SK-N-SH (cell line): ENCODE measurements at regions of chr11 and their contacts with region 1.

Region 1: DNA sequence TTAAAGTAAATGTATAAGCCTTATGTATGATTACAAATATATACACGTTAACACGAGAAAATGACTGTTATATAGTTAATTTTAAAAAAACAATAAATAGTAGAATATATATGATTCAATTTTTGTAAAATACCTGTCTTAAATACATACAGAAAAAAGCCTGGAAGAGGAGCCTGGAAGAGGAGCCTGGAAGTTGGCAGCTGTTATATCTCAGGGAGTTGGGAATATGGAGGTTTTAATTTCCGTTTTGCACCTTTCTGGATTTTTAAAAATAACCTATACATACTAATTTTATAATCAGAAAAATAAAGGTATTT is 111.6 kb downstream of the WT1 start:
- DNase-seq: no peak
- H3K4me3 ChIP-seq: no peak overlapping the region; a peak in 1 of 4 replicates
- H3K27ac ChIP-seq: no peak overlapping the region
- H3K4me1 ChIP-seq: no peaks in the 10 kb centered on the region
- H3K27me3 ChIP-seq: peaks cover 5% of the 10 kb centered on the region; the same call in 1 of the 2 replicates
- CTCF ChIP-seq: no peak
- EP300 ChIP-seq: no peak
- RAD21 ChIP-seq: no peak

Region 2: GRCh38 chr11:32307471-32307870 is 16.3 kb before region 1 on chr11:
- CTCF ChIA-PET with region 1: interaction called, 16 read pairs
- POLR2A ChIA-PET with region 1: no interaction called
- DNase-seq: no peak
- H3K4me3 ChIP-seq: no peak overlapping the region
- H3K27ac ChIP-seq: no peak overlapping the region
- H3K4me1 ChIP-seq: peaks cover 1 to 2% of the 10 kb centered on the region in 2 experiments; a peak in 2 of 4 replicates
- H3K27me3 ChIP-seq: 0 out of 2 replicates have a peak, but pooled peaks cover 7% of the 10 kb centered on the region
- CTCF ChIP-seq: no peak
- EP300 ChIP-seq: no peak
- RAD21 ChIP-seq: no peak

Region 3: GRCh38 chr11:32312865-32313403 is 10.8 kb before region 1 on chr11:
- CTCF ChIA-PET with region 1: interaction called, 11 read pairs
- POLR2A ChIA-PET with region 1: no interaction called
- DNase-seq: peak; percentile 51
- H3K4me3 ChIP-seq: peak overlapping the region in 1 of 2 experiments; percentile 18; a peak in 1 of 4 replicates
- H3K27ac ChIP-seq: no peak overlapping the region
- H3K4me1 ChIP-seq: peaks cover 2 to 4% of the 10 kb centered on the region in 2 experiments; a peak in 2 of 4 replicates
- H3K27me3 ChIP-seq: peaks cover 5% of the 10 kb centered on the region; the same call in 1 of the 2 replicates
- CTCF ChIP-seq: peak; percentile 75
- EP300 ChIP-seq: no peak
- RAD21 ChIP-seq: peak; percentile 39

Region 4: GRCh38 chr11:32334822-32335221 is 11.1 kb after region 1 on chr11:
- CTCF ChIA-PET with region 1: interaction called, 20 read pairs
- POLR2A ChIA-PET with region 1: no interaction called
- DNase-seq: no peak
- H3K4me3 ChIP-seq: no peak overlapping the region
- H3K27ac ChIP-seq: no peak overlapping the region
- H3K4me1 ChIP-seq: peaks cover 0 to 8% of the 10 kb centered on the region in 2 experiments; a peak in 1 of 4 replicates
- H3K27me3 ChIP-seq: peaks cover 15% of the 10 kb centered on the region; the same call in 1 of the 2 replicates
- CTCF ChIP-seq: peak; percentile 31
- EP300 ChIP-seq: no peak
- RAD21 ChIP-seq: no peak

Region 5: DNA sequence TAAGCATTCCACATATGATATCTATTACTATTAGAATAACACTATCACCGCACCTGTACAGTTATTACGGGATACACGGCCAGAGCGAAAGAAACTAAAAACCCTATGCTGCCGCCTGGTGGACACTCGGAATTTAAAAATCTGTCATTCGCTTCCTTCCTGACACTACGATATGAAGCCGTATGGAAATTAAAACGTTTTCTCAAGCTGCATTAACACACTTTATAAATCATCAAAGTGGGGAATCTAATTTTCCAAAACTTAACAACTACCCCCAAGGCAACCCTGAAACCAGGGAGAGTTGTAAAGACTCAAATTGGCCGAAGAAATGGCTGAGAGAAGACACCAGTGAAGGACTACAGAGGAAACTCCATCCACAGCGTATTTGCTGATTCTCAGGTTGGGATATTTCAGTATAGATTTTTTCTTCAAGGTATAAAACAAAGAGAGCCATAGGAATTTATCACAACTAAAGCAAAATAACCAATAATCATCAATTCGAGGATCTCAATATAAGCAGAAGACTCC is 469.2 kb after region 1 on chr11:
- CTCF ChIA-PET with region 1: interaction called, 13 read pairs
- POLR2A ChIA-PET with region 1: no interaction called
- DNase-seq: peak; percentile 39
- H3K4me3 ChIP-seq: peak overlapping the region; percentile 18 to 43; a peak in 2 of 4 replicates
- H3K27ac ChIP-seq: no peak overlapping the region
- H3K4me1 ChIP-seq: no peaks in the 10 kb centered on the region
- H3K27me3 ChIP-seq: peaks cover 23% of the 10 kb centered on the region
- CTCF ChIP-seq: peak; percentile 84
- EP300 ChIP-seq: no peak
- RAD21 ChIP-seq: peak; percentile 74